CD4-positive, alpha-beta memory T cell (primary cell): ENCODE measurements at regions of chr1 and their contacts with region 1.

Region 1: GRCh38 chr1:174999216-174999925 is 376 bp upstream of the CACYBP start:
- DNase-seq: peak; percentile 97 to 99 (median 99)
- H3K4me3 ChIP-seq: peak overlapping the region; percentile 42 to 63
- H3K4me3 Mint-ChIP-seq: no peak overlapping the region
- H3K27ac ChIP-seq: peak overlapping the region; percentile 99
- H3K27ac Mint-ChIP-seq: no peak overlapping the region
- H3K4me1 ChIP-seq: peaks cover 52% of the 10 kb centered on the region
- H3K4me1 Mint-ChIP-seq: peaks cover 24 to 43% (median 37%) of the 10 kb centered on the region in 4 donors
- H3K27me3 ChIP-seq: no peaks in the 10 kb centered on the region
- H3K27me3 Mint-ChIP-seq: no peaks in the 10 kb centered on the region

Region 2: DNA sequence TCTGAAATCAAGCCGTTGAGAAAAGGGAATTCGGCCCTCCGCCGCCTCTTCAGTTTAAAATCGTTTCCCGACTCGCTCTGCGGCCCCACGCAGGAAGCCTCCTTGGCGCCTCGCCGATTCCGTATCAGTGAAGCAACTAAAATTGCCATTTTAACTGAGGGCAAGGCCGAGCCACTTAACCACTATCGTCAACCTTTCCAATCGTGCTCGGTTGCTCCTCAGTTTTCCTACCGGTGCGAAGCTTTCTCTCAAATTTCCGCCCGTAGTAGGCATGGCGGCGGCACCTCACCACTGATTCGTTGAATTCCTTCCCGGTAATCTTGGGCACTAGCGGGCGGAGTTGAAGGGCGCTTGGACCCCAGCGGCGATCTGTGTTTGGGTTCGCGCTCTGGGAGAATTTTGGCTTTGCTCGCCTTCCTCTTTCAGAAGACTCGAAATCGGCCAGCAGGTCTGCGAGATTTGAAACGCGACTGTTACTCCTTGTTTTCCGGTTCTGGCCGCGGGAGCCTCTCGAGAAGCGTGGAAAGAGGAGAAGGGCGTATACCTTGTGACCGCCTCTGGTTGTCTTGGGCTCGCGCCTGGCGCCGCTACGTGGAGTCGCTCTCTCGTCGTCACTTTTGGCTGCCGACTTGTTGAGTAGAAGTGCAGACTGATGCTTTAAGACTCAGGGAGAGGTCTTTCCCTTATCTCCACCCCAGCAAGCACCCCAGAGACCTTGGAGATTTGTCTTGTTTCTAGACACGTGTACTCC is 1174.9 kb before region 1 on chr1 and contains the starts of genes CENPL and DARS2:
- CTCF ChIA-PET with region 1: no interaction called
- POLR2A ChIA-PET with region 1: interaction called, 7 read pairs
- intact Hi-C with region 1: loop called (anchors 10 kb)
- DNase-seq: peak; percentile 92 to 96 (median 93)
- H3K4me3 ChIP-seq: peak within 1 kb of the TSS; percentile 93 to 95
- H3K4me3 Mint-ChIP-seq: peak within 1 kb of the TSS; percentile 93 to 99 (median 97)
- H3K27ac ChIP-seq: peak within 1 kb of the TSS; percentile 79
- H3K27ac Mint-ChIP-seq: peak within 1 kb of the TSS; percentile 97 to 99 (median 97)
- H3K4me1 ChIP-seq: peaks cover 18% of the 10 kb centered on the region
- H3K4me1 Mint-ChIP-seq: peaks cover 27 to 46% (median 33%) of the 10 kb centered on the region in 4 donors
- H3K27me3 ChIP-seq: no peaks in the 10 kb centered on the region
- H3K27me3 Mint-ChIP-seq: no peaks in the 10 kb centered on the region
- total RNA-seq, gene CENPL: 9.0 to 10.2 TPM
- total RNA-seq, gene DARS2: 13.4 to 13.5 TPM

Region 3: GRCh38 chr1:174262349-174263241 is 736.8 kb before region 1 on chr1:
- CTCF ChIA-PET with region 1: no interaction called
- POLR2A ChIA-PET with region 1: no interaction called
- intact Hi-C with region 1: loop called (anchors 5 kb)
- DNase-seq: peak in 4 of 5 donors; percentile 15 to 24 (median 16)
- H3K4me3 ChIP-seq: no peak overlapping the region
- H3K4me3 Mint-ChIP-seq: no peak overlapping the region
- H3K27ac ChIP-seq: no peak overlapping the region
- H3K27ac Mint-ChIP-seq: peak overlapping the region in 1 of 7 donors; percentile 60
- H3K4me1 ChIP-seq: no peaks in the 10 kb centered on the region
- H3K4me1 Mint-ChIP-seq: no peaks in the 10 kb centered on the region
- H3K27me3 ChIP-seq: no peaks in the 10 kb centered on the region
- H3K27me3 Mint-ChIP-seq: no peaks in the 10 kb centered on the region

Region 4: GRCh38 chr1:174534789-174535188 is 464.6 kb before region 1 on chr1:
- CTCF ChIA-PET with region 1: no interaction called
- POLR2A ChIA-PET with region 1: no interaction called
- intact Hi-C with region 1: no loop called
- DNase-seq: no peak
- H3K4me3 ChIP-seq: no peak overlapping the region
- H3K4me3 Mint-ChIP-seq: no peak overlapping the region
- H3K27ac ChIP-seq: no peak overlapping the region
- H3K27ac Mint-ChIP-seq: no peak overlapping the region
- H3K4me1 ChIP-seq: no peaks in the 10 kb centered on the region
- H3K4me1 Mint-ChIP-seq: peaks cover 0 to 5% (median 3%) of the 10 kb centered on the region in 4 donors
- H3K27me3 ChIP-seq: no peaks in the 10 kb centered on the region
- H3K27me3 Mint-ChIP-seq: no peaks in the 10 kb centered on the region

Region 5: DNA sequence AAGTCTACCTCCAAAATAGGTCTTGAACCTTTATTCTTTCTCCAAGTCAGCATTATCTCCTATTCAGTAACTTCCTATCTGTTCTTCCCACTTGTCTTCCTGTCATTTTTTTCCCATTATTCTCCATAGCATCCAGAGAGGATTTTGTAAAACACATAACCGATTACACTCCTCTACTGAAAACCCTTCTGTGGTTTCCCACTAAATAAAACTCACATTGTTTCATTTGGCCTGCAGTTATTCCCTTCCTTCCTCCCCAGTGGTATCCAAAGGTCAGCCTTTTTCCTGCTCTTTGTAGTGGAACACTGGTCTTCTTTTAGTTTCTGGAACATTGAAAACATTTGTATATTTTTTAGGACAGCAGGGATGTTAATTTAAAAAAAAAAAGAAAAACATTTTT is 285.6 kb before region 1 on chr1:
- CTCF ChIA-PET with region 1: no interaction called
- POLR2A ChIA-PET with region 1: no interaction called
- intact Hi-C with region 1: no loop called
- DNase-seq: no peak
- H3K4me3 ChIP-seq: no peak overlapping the region
- H3K4me3 Mint-ChIP-seq: no peak overlapping the region
- H3K27ac ChIP-seq: no peak overlapping the region
- H3K27ac Mint-ChIP-seq: no peak overlapping the region
- H3K4me1 ChIP-seq: no peaks in the 10 kb centered on the region
- H3K4me1 Mint-ChIP-seq: peaks cover 0 to 2% (median 0%) of the 10 kb centered on the region in 4 donors
- H3K27me3 ChIP-seq: no peaks in the 10 kb centered on the region
- H3K27me3 Mint-ChIP-seq: no peaks in the 10 kb centered on the region

Region 6: DNA sequence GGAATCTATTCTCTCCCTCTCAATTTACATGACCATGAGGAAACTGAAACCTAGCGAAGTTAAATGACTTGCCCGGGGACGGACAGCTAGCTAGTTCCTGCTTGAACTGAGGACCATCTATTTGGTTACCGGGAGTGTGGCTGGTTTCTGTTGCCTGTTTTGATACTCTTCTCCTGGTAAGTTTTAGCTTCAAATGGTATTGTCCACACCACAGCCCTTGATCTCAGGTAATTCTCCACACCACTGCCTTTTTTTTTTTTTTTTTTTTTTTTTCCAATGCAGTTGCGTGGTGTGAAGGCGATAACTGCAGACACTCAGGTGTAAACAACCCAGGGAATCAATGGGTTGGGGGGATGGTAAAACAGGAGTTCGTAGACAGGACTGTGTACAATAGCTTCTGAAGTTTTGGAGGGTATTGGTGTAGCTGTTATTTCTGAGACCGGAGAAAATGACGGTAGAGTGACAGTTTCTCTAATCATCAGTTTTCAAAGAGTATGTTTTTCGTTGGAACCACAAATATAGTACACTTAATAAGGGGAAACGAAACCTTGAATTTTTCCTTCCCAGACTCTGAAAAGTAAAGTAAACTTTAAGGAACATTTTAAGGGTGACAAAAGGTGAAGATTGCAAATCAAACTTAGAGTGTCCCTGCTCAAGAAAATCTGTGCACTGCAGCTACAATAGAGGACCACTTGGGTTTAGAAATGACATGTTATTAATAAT is 124.9 kb before region 1 on chr1:
- CTCF ChIA-PET with region 1: interaction called, 8 read pairs
- POLR2A ChIA-PET with region 1: interaction called, 17 read pairs
- intact Hi-C with region 1: no loop called
- DNase-seq: no peak
- H3K4me3 ChIP-seq: no peak overlapping the region
- H3K4me3 Mint-ChIP-seq: peak overlapping the region; percentile 78 to 89 (median 84)
- H3K27ac ChIP-seq: no peak overlapping the region
- H3K27ac Mint-ChIP-seq: peak overlapping the region; percentile 62 to 88 (median 77)
- H3K4me1 ChIP-seq: peaks cover 19% of the 10 kb centered on the region
- H3K4me1 Mint-ChIP-seq: peaks cover 12 to 38% (median 18%) of the 10 kb centered on the region in 4 donors
- H3K27me3 ChIP-seq: no peaks in the 10 kb centered on the region
- H3K27me3 Mint-ChIP-seq: no peaks in the 10 kb centered on the region

Region 7: GRCh38 chr1:174976436-174977108 is 22.8 kb before region 1 on chr1:
- CTCF ChIA-PET with region 1: interaction called, 55 read pairs
- POLR2A ChIA-PET with region 1: interaction called, 315 read pairs
- intact Hi-C with region 1: no loop called
- DNase-seq: no peak
- H3K4me3 ChIP-seq: no peak overlapping the region
- H3K4me3 Mint-ChIP-seq: no peak overlapping the region
- H3K27ac ChIP-seq: no peak overlapping the region
- H3K27ac Mint-ChIP-seq: peak overlapping the region in 6 of 7 donors; percentile 5 to 71 (median 48)
- H3K4me1 ChIP-seq: peaks cover 30% of the 10 kb centered on the region
- H3K4me1 Mint-ChIP-seq: peaks cover 36 to 54% (median 50%) of the 10 kb centered on the region in 4 donors
- H3K27me3 ChIP-seq: no peaks in the 10 kb centered on the region
- H3K27me3 Mint-ChIP-seq: no peaks in the 10 kb centered on the region

Region 8: GRCh38 chr1:175023043-175023921 is 23.9 kb after region 1 on chr1 and contains the start of gene MRPS14:
- CTCF ChIA-PET with region 1: interaction called, 12 read pairs
- POLR2A ChIA-PET with region 1: interaction called, 248 read pairs
- intact Hi-C with region 1: loop called (anchors 1 kb)
- DNase-seq: peak; percentile 95 to 98 (median 97)
- H3K4me3 ChIP-seq: peak within 1 kb of the TSS; percentile 79 to 97
- H3K4me3 Mint-ChIP-seq: peak within 1 kb of the TSS; percentile 90 to 98 (median 93)
- H3K27ac ChIP-seq: peak within 1 kb of the TSS; percentile 94
- H3K27ac Mint-ChIP-seq: peak within 1 kb of the TSS; percentile 86 to 97 (median 97)
- H3K4me1 ChIP-seq: peaks cover 25% of the 10 kb centered on the region
- H3K4me1 Mint-ChIP-seq: peaks cover 24 to 43% (median 28%) of the 10 kb centered on the region in 4 donors
- H3K27me3 ChIP-seq: no peaks in the 10 kb centered on the region
- H3K27me3 Mint-ChIP-seq: no peaks in the 10 kb centered on the region
- total RNA-seq, gene MRPS14: 39.3 to 40.6 TPM